Caco-2 (cell line): ENCODE measurements at regions of chr7 and their contacts with region 1.

Region 1: DNA sequence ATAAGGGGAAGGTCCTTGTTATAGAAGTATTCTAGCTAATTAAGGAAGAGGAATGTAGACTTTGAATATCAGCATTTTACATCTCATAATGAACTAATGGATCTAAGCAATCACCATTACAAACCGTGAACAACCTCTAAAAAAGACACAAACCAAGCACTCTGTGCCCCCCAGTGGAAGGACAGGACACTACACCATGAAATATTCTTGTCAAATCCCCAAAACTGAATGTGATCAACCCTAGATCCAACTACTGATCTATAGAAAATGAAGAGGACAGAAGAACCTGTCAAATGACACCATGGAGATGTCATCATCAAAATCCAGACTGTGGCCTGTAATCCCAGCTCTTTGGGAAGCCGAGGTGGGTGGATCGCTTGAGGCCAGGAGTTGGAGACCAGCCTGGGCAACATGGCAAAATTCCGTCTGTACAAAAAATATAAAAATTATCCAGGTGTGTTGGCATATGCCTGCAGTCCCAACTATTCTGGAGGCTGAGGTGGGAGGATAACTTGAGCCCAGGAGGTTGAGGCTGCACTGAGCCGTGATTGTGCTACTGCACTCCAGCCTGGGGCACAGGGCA is 111.3 kb upstream of the CARD11 start:
- DNase-seq: peak in 1 of 2 experiments; percentile 55
- H3K4me3 ChIP-seq: no peak overlapping the region
- H3K4me3 Mint-ChIP-seq: no peak overlapping the region
- H3K27ac Mint-ChIP-seq: no peak overlapping the region
- H3K4me1 ChIP-seq: no peaks in the 10 kb centered on the region
- H3K4me1 Mint-ChIP-seq: no peaks in the 10 kb centered on the region
- H3K27me3 ChIP-seq: no peaks in the 10 kb centered on the region
- H3K27me3 Mint-ChIP-seq: peaks cover 5% of the 10 kb centered on the region
- CTCF ChIP-seq: peak; percentile 67 to 72

Region 2: DNA sequence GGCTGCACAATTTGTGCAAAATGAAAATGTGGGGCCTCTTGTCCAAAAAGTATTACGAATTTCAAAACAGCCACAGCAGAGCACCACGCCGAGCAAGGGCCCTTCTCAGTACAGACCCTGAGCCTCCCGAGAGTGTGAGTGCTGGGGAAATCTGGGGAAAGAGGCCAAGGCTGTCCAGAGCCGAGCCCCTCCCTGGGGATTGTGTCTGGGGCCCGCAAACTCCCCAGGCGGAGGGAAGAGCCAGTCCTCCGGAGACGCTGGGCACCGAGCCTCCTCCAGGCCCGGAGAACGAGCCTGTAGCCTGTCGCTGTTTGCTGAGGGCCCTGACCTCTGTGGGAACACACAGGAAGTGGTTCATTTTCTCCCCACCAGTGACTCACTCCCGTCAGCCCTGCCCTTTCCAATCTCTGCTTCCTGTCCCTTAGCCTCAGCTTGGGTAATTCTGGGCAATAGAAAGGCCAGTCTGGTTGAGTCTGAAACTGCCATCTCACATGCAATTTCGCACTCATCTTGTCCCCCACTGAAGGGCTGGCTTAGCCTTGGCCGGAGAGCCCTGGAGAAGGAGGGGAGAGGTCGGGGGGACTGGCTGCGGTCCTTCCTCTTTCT is 291.4 kb before region 1 on chr7:
- CTCF ChIA-PET with region 1: no interaction called
- POLR2A ChIA-PET with region 1: no interaction called
- intact Hi-C with region 1: loop called (anchors 1 kb)
- DNase-seq: no peak
- H3K4me3 ChIP-seq: no peak overlapping the region
- H3K4me3 Mint-ChIP-seq: no peak overlapping the region
- H3K27ac Mint-ChIP-seq: peak overlapping the region; percentile 82
- H3K4me1 ChIP-seq: peaks cover 7% of the 10 kb centered on the region; the same call in 1 of the 2 replicates
- H3K4me1 Mint-ChIP-seq: no peaks in the 10 kb centered on the region
- H3K27me3 ChIP-seq: no peaks in the 10 kb centered on the region
- H3K27me3 Mint-ChIP-seq: no peaks in the 10 kb centered on the region
- CTCF ChIP-seq: no peak

Region 3: GRCh38 chr7:2886900-2887299 is 268.1 kb before region 1 on chr7:
- CTCF ChIA-PET with region 1: no interaction called
- POLR2A ChIA-PET with region 1: no interaction called
- intact Hi-C with region 1: loop called (anchors 1 kb)
- DNase-seq: peak; percentile 76 to 77
- H3K4me3 ChIP-seq: no peak overlapping the region
- H3K4me3 Mint-ChIP-seq: no peak overlapping the region
- H3K27ac Mint-ChIP-seq: peak overlapping the region; percentile 52
- H3K4me1 ChIP-seq: no peaks in the 10 kb centered on the region
- H3K4me1 Mint-ChIP-seq: peaks cover 7% of the 10 kb centered on the region
- H3K27me3 ChIP-seq: no peaks in the 10 kb centered on the region
- H3K27me3 Mint-ChIP-seq: peaks cover 3% of the 10 kb centered on the region
- CTCF ChIP-seq: peak; percentile 70 to 92

Region 4: GRCh38 chr7:3065724-3066143 is 89.3 kb before region 1 on chr7:
- CTCF ChIA-PET with region 1: no interaction called
- POLR2A ChIA-PET with region 1: no interaction called
- intact Hi-C with region 1: loop called (anchors 1 kb)
- DNase-seq: peak; percentile 49 to 55
- H3K4me3 ChIP-seq: no peak overlapping the region
- H3K4me3 Mint-ChIP-seq: no peak overlapping the region
- H3K27ac Mint-ChIP-seq: no peak overlapping the region
- H3K4me1 ChIP-seq: no peaks in the 10 kb centered on the region
- H3K4me1 Mint-ChIP-seq: no peaks in the 10 kb centered on the region
- H3K27me3 ChIP-seq: no peaks in the 10 kb centered on the region
- H3K27me3 Mint-ChIP-seq: peaks cover 4% of the 10 kb centered on the region
- CTCF ChIP-seq: peak; percentile 53 to 59

Region 5: GRCh38 chr7:3218411-3219225 is 63.6 kb after region 1 on chr7:
- CTCF ChIA-PET with region 1: no interaction called
- POLR2A ChIA-PET with region 1: no interaction called
- intact Hi-C with region 1: no loop called
- DNase-seq: peak in 1 of 2 experiments; percentile 43
- H3K4me3 ChIP-seq: no peak overlapping the region
- H3K4me3 Mint-ChIP-seq: peak overlapping the region; percentile 33
- H3K27ac Mint-ChIP-seq: peak overlapping the region; percentile 39
- H3K4me1 ChIP-seq: peaks cover 13% of the 10 kb centered on the region
- H3K4me1 Mint-ChIP-seq: peaks cover 23% of the 10 kb centered on the region
- H3K27me3 ChIP-seq: no peaks in the 10 kb centered on the region
- H3K27me3 Mint-ChIP-seq: no peaks in the 10 kb centered on the region
- CTCF ChIP-seq: no peak